ENCODE measurements at regions of chr10 and their contacts with region 1.

Region 1: DNA sequence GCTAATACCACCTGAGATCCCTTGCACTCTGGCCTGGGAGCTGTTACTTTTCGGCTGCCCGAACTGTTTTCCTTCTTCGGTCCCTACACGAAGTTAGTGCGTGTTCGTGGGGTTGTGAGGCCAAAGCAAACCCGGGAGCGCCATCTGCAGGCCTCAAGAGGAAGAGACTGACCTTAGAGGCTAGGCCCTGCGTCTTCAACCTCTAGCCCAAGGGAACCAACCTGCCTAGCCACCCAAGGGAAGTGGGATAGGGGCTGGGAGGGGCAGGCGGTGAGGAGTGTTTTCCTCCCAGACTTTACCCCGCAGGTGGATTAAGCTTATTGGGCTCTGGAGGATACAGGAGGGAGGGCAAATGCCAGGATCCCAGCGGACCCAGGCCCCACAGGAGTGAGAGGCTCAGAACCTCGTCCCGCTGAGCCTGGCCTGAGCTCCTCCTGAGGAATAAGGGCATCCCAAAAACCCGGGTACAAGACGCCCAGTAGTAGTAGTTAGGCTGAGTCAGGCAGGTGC is 1.7 kb upstream of the PAX2 start:
- DNase-seq: peak; percentile 64 to 70 (median 66)
- ATAC-seq: peak; percentile 90
- H3K4me3 ChIP-seq: no peak overlapping the region
- H3K27ac ChIP-seq: no peak overlapping the region
- H3K4me1 ChIP-seq: peaks cover 0 to 29% of the 10 kb centered on the region in 2 experiments; a peak in 2 of 5 replicates
- H3K27me3 ChIP-seq: peaks cover 19 to 75% of the 10 kb centered on the region in 2 experiments; a peak in 4 of 5 replicates
- CTCF ChIP-seq: peak; percentile 70 to 78 (median 72)
- EP300 ChIP-seq: no peak
- POLR2A ChIP-seq: no peak
- RAD21 ChIP-seq: peak; percentile 57 to 76

Region 2: DNA sequence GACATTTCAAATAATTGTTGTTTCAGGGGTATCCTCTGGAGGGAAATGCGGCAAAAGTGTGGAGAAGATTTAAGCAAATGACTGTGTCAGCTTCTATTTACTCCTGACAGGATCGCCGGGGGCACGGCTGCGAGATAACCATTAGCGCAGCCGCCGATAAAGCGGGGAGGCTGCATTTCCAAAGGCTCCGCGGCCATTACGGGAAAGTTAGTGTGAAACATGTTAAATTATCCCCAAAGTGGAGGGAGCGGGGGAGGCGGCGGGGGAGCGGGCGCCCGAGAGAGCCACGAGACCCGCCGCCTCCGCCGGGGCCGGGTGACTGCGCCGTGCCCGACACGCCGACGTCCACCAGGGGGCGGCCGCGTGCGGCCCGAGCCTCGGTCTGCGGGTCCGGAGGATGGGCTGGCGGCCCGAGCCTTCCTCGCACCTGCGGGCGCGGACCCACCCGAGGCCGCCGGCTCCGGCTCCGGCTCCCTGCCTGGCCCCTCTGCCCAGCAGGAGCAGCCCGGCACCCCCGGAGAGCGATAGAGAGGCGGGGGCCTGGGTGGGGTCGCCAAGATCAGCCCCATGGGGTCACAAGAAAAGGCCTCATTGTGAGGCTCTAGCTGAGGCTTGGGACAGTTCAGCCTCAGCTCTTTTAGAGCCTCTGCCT is 72.7 kb before region 1 on chr10:
- CTCF ChIA-PET with region 1: interaction called, 5 read pairs
- POLR2A ChIA-PET with region 1: no interaction called
- in situ Hi-C with region 1: no loop called
- intact Hi-C with region 1: loop called (anchors 5 kb)
- DNase-seq: peak; percentile 39 to 80 (median 73)
- ATAC-seq: peak; percentile 97
- H3K4me3 ChIP-seq: no peak overlapping the region
- H3K27ac ChIP-seq: no peak overlapping the region
- H3K4me1 ChIP-seq: peaks cover 0 to 6% of the 10 kb centered on the region in 2 experiments; a peak in 2 of 5 replicates
- H3K27me3 ChIP-seq: peaks cover 3 to 15% of the 10 kb centered on the region in 2 experiments; a peak in 4 of 5 replicates
- CTCF ChIP-seq: peak; percentile 56 to 82 (median 61)
- EP300 ChIP-seq: no peak
- POLR2A ChIP-seq: no peak
- RAD21 ChIP-seq: peak; percentile 27 to 56; a peak in 3 of 4 replicates

Region 3: GRCh38 chr10:100710151-100710871 is 33.4 kb before region 1 on chr10:
- CTCF ChIA-PET with region 1: no interaction called
- POLR2A ChIA-PET with region 1: no interaction called
- in situ Hi-C with region 1: no loop called
- intact Hi-C with region 1: no loop called
- DNase-seq: peak in 1 of 4 experiments; percentile 12
- ATAC-seq: no peak
- H3K4me3 ChIP-seq: no peak overlapping the region
- H3K27ac ChIP-seq: no peak overlapping the region
- H3K4me1 ChIP-seq: peaks cover 0 to under 1% of the 10 kb centered on the region in 2 experiments; a peak in 1 of 5 replicates
- H3K27me3 ChIP-seq: peaks cover 2 to 53% of the 10 kb centered on the region in 2 experiments; a peak in 3 of 5 replicates
- CTCF ChIP-seq: no peak
- EP300 ChIP-seq: no peak
- POLR2A ChIP-seq: no peak
- RAD21 ChIP-seq: no peak